Activated CD4-positive, alpha-beta T cell treated with anti-CD3 and anti-CD28 coated beads for 36 hours (primary cell): ENCODE measurements at regions of chr12 and their contacts with region 1.

Region 1: GRCh38 chr12:57744777-57745484 is at the start of gene TSPAN31:
- DNase-seq: peak; percentile 98
- ATAC-seq: peak; percentile 82
- H3K4me3 Mint-ChIP-seq: peak within 1 kb of the TSS; percentile 94
- H3K27ac Mint-ChIP-seq: peak within 1 kb of the TSS; percentile 98
- H3K4me1 Mint-ChIP-seq: peaks cover 47% of the 10 kb centered on the region
- H3K27me3 Mint-ChIP-seq: no peaks in the 10 kb centered on the region
- total RNA-seq, gene TSPAN31: 13.6 to 15.9 TPM

Region 2: GRCh38 chr12:57046947-57047890 is 697.7 kb before region 1 on chr12:
- CTCF ChIA-PET with region 1: no interaction called
- POLR2A ChIA-PET with region 1: no interaction called
- intact Hi-C with region 1: no loop called
- DNase-seq: peak; percentile 78
- ATAC-seq: peak; percentile 94
- H3K4me3 Mint-ChIP-seq: peak overlapping the region; percentile 22
- H3K27ac Mint-ChIP-seq: peak overlapping the region; percentile 85
- H3K4me1 Mint-ChIP-seq: peaks cover 32% of the 10 kb centered on the region
- H3K27me3 Mint-ChIP-seq: no peaks in the 10 kb centered on the region

Region 3: GRCh38 chr12:57088459-57089248 is 656.3 kb before region 1 on chr12 and contains the start of gene NAB2:
- CTCF ChIA-PET with region 1: no interaction called
- POLR2A ChIA-PET with region 1: no interaction called
- intact Hi-C with region 1: loop called in 1 of 2 experiments (anchors 5 kb)
- DNase-seq: peak; percentile 95
- ATAC-seq: peak; percentile 49
- H3K4me3 Mint-ChIP-seq: peak within 1 kb of the TSS; percentile 93
- H3K27ac Mint-ChIP-seq: peak within 1 kb of the TSS; percentile 95
- H3K4me1 Mint-ChIP-seq: peaks cover 63% of the 10 kb centered on the region
- H3K27me3 Mint-ChIP-seq: no peaks in the 10 kb centered on the region
- total RNA-seq, gene NAB2: 46.8 to 48.6 TPM

Region 4: DNA sequence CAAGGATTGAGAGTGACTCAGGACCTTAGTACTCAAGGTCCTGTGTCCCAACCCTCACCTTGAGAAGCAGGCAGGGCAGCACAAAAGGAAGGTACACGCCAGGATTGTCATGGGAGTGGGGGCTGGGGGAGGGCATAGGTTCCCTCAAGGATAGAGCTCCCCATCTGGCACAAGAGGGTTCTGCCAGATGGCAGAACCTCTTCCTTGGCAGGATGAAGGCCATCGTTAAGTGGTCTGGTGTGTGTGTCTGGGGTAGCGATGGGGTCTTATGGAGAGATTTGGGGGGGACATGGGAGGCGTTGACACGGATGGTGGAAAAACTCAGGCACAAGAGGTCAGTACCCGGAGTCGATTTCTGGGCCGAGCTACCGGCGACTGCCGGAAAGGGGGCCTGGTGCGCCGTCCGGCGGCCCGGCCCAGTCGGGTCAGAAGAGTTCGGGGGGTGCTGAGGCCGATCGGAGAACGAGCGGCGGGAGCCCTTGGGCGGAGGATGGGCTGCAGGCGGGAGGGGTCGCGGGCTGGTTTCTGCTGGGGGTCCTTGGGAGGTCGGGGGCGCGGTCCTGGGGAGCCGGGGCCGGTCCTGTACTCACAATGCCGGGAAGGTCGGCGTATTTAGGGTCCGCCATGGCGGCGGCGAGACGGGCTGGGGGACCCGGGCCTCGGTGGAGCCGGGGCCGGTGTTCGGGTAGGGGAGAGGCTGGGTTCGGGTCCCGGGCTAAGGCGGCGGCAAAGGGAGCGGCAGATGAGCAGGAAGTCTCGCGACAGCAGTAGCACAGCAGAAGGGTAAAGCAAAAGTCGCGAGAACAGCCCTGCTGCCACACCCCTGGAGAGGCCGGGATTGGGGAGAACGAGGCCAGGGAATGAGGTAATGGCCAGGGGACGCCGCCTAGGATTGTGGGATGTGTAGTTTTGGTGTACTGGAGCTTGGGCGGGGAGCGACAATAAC is 198.2 kb before region 1 on chr12 and contains the start of gene DCTN2:
- CTCF ChIA-PET with region 1: no interaction called
- POLR2A ChIA-PET with region 1: no interaction called
- intact Hi-C with region 1: loop called in 1 of 2 experiments (anchors 1 kb)
- DNase-seq: peak; percentile 97
- ATAC-seq: peak; percentile 98
- H3K4me3 Mint-ChIP-seq: peak within 1 kb of the TSS; percentile 99
- H3K27ac Mint-ChIP-seq: peak within 1 kb of the TSS; percentile 99
- H3K4me1 Mint-ChIP-seq: peaks cover 45% of the 10 kb centered on the region
- H3K27me3 Mint-ChIP-seq: peaks cover 13% of the 10 kb centered on the region
- total RNA-seq, gene DCTN2: 69.7 to 81.2 TPM

Region 5: DNA sequence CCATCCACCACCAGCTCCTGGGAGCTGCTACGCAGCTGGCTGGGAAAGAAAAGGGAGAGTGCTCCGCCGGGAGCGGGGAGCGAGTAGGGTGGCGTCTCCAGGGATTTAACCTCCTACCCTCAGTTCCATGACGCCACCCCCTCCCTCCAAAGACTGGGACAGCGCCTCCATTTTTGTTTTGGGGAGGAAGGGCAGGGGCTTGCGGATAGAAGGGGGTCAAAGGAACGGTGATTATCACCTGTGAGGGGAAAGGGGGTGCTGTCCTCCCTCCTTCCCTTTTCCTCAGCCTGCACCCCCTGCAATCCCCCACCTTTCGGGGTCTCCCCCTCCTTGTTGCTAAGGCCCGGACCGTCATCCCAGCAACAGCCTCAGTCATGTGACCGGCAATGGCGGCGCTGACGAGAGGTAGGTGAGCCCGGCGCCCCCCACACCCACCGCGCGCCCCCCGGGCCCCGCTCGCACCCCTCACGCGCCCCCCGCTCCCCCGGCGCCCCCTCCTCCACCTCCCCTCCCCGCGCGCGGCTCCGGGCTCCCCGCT is 140.4 kb before region 1 on chr12 and contains the start of gene DTX3:
- CTCF ChIA-PET with region 1: no interaction called
- POLR2A ChIA-PET with region 1: no interaction called
- intact Hi-C with region 1: no loop called
- DNase-seq: peak; percentile 71
- ATAC-seq: peak; percentile 68
- H3K4me3 Mint-ChIP-seq: peak within 1 kb of the TSS; percentile 71
- H3K27ac Mint-ChIP-seq: peak within 1 kb of the TSS; percentile 81
- H3K4me1 Mint-ChIP-seq: peaks cover 23% of the 10 kb centered on the region
- H3K27me3 Mint-ChIP-seq: no peaks in the 10 kb centered on the region
- total RNA-seq, gene DTX3: 16.7 to 17.0 TPM

Region 6: GRCh38 chr12:57693659-57694458 is 51.1 kb before region 1 on chr12 and contains the start of gene OS9:
- CTCF ChIA-PET with region 1: interaction called, 3 read pairs
- POLR2A ChIA-PET with region 1: no interaction called
- intact Hi-C with region 1: loop called (anchors 1 to 2 kb)
- DNase-seq: peak; percentile 96
- ATAC-seq: peak; percentile 98
- H3K4me3 Mint-ChIP-seq: no peak within 1 kb of the TSS
- H3K27ac Mint-ChIP-seq: no peak within 1 kb of the TSS
- H3K4me1 Mint-ChIP-seq: peaks cover 4% of the 10 kb centered on the region
- H3K27me3 Mint-ChIP-seq: peaks cover 8% of the 10 kb centered on the region
- total RNA-seq, gene OS9: 61.7 to 63.2 TPM

Region 7: DNA sequence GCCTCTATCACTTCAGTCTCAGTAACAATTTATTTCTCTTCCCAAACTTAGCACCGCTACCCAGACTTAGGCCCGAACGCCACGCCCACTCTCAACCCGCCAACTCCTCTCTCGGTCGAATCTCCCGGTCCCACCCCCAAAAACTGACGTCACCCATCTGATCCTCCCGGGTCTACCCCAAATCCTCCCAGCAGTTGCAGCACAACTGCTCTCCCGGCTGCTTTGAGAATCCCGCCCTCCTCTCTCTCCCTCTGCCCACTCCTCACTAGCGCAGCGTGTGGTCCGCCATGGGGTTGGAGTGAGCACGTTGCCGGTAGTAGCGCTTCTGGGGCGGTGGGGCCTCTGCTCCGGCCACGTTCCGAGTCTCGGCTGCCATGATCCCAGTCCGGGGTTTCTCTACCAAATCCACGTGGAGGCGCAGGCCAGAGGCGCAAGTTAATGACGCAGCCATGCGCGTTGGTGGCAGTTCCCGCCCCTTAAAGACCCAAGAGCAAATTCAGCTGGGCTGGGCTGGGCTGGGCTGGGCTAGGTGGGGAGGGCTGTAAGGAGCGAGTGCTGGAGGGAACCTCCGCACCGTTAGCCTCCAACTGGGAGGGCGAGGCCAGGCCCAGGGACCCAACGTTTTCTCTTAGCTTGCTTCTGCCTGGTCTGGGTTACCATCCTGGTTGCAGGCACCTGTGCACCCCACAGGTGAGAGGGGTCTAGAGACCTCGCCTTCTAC is 26.9 kb after region 1 on chr12 and contains the start of gene METTL1:
- CTCF ChIA-PET with region 1: interaction called, 3 read pairs
- POLR2A ChIA-PET with region 1: no interaction called
- intact Hi-C with region 1: loop called in 1 of 2 experiments (anchors 1 kb)
- DNase-seq: peak; percentile 97
- ATAC-seq: peak; percentile 89
- H3K4me3 Mint-ChIP-seq: peak within 1 kb of the TSS; percentile 94
- H3K27ac Mint-ChIP-seq: peak within 1 kb of the TSS; percentile 98
- H3K4me1 Mint-ChIP-seq: peaks cover 24% of the 10 kb centered on the region
- H3K27me3 Mint-ChIP-seq: no peaks in the 10 kb centered on the region
- total RNA-seq, gene METTL1: 31.9 to 33.5 TPM